ENCODE measurements at regions of chr14 and their contacts with region 1.

Region 1: GRCh38 chr14:52068615-52069303 is at the start of gene NID2:
- DNase-seq: peak; percentile 68
- H3K4me3 ChIP-seq: peak within 1 kb of the TSS; percentile 41 to 84 (median 63)
- H3K27ac ChIP-seq: no peak within 1 kb of the TSS
- H3K4me1 ChIP-seq: peaks cover 30% of the 10 kb centered on the region
- H3K27me3 ChIP-seq: peaks cover 0 to 2% of the 10 kb centered on the region in 2 experiments
- CTCF ChIP-seq: no peak
- POLR2A ChIP-seq: no peak
- total RNA-seq, gene NID2: 33.0 and 56.7 TPM in 2 replicates

Region 2: GRCh38 chr14:51395361-51395849 is 673.4 kb before region 1 on chr14:
- CTCF ChIA-PET with region 1: no interaction called
- POLR2A ChIA-PET with region 1: no interaction called
- dilution Hi-C with region 1: no loop called
- intact Hi-C with region 1: loop called (anchors 1 kb)
- DNase-seq: peak; percentile 91
- H3K4me3 ChIP-seq: peak overlapping the region in 1 of 3 experiments; percentile 26
- H3K27ac ChIP-seq: peak overlapping the region; percentile 99
- H3K4me1 ChIP-seq: peaks cover 52% of the 10 kb centered on the region
- H3K27me3 ChIP-seq: no peaks in the 10 kb centered on the region
- CTCF ChIP-seq: no peak
- POLR2A ChIP-seq: no peak

Region 3: GRCh38 chr14:51939727-51940390 is 128.9 kb before region 1 on chr14:
- CTCF ChIA-PET with region 1: no interaction called
- POLR2A ChIA-PET with region 1: no interaction called
- dilution Hi-C with region 1: no loop called
- intact Hi-C with region 1: no loop called
- DNase-seq: no peak
- H3K4me3 ChIP-seq: no peak overlapping the region
- H3K27ac ChIP-seq: no peak overlapping the region
- H3K4me1 ChIP-seq: no peaks in the 10 kb centered on the region
- H3K27me3 ChIP-seq: peaks cover 4 to 10% of the 10 kb centered on the region in 2 experiments
- CTCF ChIP-seq: no peak
- POLR2A ChIP-seq: no peak

Region 4: DNA sequence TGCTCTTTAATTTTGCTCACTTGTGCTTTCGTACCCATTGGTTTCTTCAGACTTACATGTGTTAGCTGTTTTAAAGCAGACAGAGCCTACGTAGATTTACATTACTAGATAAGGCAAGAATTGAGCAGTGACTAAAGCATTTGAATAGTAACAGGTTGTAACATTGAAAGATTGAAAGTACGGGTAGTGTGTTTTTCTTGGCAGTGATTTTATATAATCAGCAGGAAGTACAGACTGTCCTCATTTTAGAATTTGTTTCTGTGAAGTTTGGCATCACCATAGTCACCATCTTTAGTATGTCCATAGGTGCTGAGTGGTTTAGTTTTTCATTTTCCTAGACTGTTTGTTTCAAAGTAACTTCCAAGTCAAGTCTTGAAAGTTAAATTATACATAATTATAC is 65.4 kb before region 1 on chr14:
- CTCF ChIA-PET with region 1: interaction called, 14 read pairs
- POLR2A ChIA-PET with region 1: no interaction called
- dilution Hi-C with region 1: no loop called
- intact Hi-C with region 1: no loop called
- DNase-seq: peak; percentile 33
- H3K4me3 ChIP-seq: no peak overlapping the region
- H3K27ac ChIP-seq: peak overlapping the region; percentile 66
- H3K4me1 ChIP-seq: peaks cover 17% of the 10 kb centered on the region
- H3K27me3 ChIP-seq: no peaks in the 10 kb centered on the region
- CTCF ChIP-seq: no peak
- POLR2A ChIP-seq: no peak

Region 5: DNA sequence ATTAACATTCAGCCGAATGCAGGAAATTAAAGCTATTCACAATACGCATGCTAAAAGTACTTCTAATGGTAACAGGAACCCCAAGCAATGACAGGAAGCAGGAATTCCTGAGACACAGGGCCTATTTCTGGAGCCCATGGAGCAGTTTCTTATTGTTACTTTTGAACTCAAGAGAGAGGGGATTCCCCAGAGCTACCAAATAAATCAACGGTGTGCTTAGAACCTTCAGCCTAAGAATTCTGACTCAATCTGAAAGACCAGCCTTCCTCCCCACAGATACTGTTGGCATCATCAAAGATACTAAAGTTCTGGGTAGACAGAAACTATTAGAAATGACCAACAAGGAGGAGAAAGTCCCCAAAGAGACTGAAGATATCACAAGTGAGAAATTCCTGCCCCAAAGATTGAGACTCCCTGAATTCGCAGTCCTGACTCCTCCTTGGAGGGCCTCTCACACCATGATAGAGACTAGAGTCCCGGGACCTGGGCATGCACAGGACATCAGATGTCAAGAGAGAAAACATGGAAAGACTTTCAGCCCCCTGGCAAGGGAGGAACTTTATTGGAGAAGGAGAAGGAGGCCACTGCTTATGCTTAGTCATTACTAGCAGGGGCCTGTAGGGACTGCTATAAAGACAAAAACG is 46.7 kb before region 1 on chr14:
- CTCF ChIA-PET with region 1: interaction called, 43 read pairs
- POLR2A ChIA-PET with region 1: no interaction called
- dilution Hi-C with region 1: no loop called
- intact Hi-C with region 1: loop called (anchors 1 kb)
- DNase-seq: peak; percentile 89
- H3K4me3 ChIP-seq: no peak overlapping the region
- H3K27ac ChIP-seq: peak overlapping the region; percentile 88
- H3K4me1 ChIP-seq: peaks cover 72% of the 10 kb centered on the region
- H3K27me3 ChIP-seq: no peaks in the 10 kb centered on the region
- CTCF ChIP-seq: no peak
- POLR2A ChIP-seq: peak; percentile 22

Region 6: GRCh38 chr14:52080817-52081755 is 12.3 kb after region 1 on chr14:
- CTCF ChIA-PET with region 1: interaction called, 34 read pairs
- POLR2A ChIA-PET with region 1: no interaction called
- dilution Hi-C with region 1: no loop called
- intact Hi-C with region 1: no loop called
- DNase-seq: peak; percentile 26
- H3K4me3 ChIP-seq: no peak overlapping the region
- H3K27ac ChIP-seq: no peak overlapping the region
- H3K4me1 ChIP-seq: peaks cover 47% of the 10 kb centered on the region
- H3K27me3 ChIP-seq: no peaks in the 10 kb centered on the region
- CTCF ChIP-seq: no peak
- POLR2A ChIP-seq: no peak